ENCODE measurements at regions of chr18 and their contacts with region 1.

Region 1: DNA sequence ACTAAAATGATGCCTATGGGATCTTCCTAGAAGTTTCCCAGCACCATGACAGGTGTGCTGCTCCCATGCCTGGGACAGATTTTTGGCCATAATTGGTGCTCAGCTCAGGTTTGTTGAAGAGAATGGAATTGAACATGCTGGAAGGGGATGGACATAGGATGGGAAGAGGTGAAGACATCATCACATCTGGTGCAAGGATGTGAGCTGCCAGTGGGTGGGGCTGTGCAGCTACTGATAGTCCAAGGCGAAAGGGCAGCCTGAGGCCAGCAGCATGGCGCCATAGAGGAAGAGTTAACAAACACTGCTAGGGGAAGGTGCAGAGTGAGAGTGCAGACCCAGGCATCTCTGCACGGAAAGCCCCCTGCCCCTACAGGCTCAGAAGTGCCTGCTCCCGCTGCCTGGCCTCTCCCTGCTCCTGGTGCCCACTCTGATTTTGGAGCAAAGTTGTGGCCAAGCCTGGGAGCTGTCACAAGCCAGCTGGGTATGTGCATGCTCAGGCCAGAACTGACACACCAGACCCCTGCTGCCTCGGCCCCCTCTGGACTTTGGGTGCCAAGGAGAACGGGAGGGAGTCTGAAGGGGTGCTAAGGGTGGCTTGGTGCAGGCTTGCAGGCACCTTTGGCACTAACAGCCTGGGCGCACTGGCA is 178.6 kb downstream of the ZBTB7C start:
- DNase-seq: peak; percentile 31
- ATAC-seq: peak; percentile 89
- H3K4me3 ChIP-seq: no peak overlapping the region
- H3K27ac ChIP-seq: no peak overlapping the region
- H3K4me1 ChIP-seq: no peaks in the 10 kb centered on the region
- H3K27me3 ChIP-seq: peaks cover 8% of the 10 kb centered on the region; the same call in 1 of the 2 replicates
- CTCF ChIP-seq: peak; percentile 51
- POLR2A ChIP-seq: no peak
- RAD21 ChIP-seq: peak; percentile 70

Region 2: GRCh38 chr18:48345596-48345995 is 115.0 kb after region 1 on chr18:
- CTCF ChIA-PET with region 1: no interaction called
- POLR2A ChIA-PET with region 1: no interaction called
- dilution Hi-C with region 1: no loop called
- in situ Hi-C with region 1: no loop called
- intact Hi-C with region 1: loop called (anchors 1 kb)
- DNase-seq: peak; percentile 4
- ATAC-seq: no peak
- H3K4me3 ChIP-seq: no peak overlapping the region
- H3K27ac ChIP-seq: no peak overlapping the region
- H3K4me1 ChIP-seq: no peaks in the 10 kb centered on the region
- H3K27me3 ChIP-seq: peaks cover 29% of the 10 kb centered on the region
- CTCF ChIP-seq: peak; percentile 37
- POLR2A ChIP-seq: no peak
- RAD21 ChIP-seq: peak; percentile 46; the same call in 1 of the 2 replicates

Region 3: GRCh38 chr18:48470484-48471180 is 240.0 kb after region 1 on chr18:
- CTCF ChIA-PET with region 1: no interaction called
- POLR2A ChIA-PET with region 1: no interaction called
- dilution Hi-C with region 1: no loop called
- in situ Hi-C with region 1: no loop called
- intact Hi-C with region 1: loop called (anchors 5 kb)
- DNase-seq: no peak
- ATAC-seq: peak; percentile 64
- H3K4me3 ChIP-seq: no peak overlapping the region
- H3K27ac ChIP-seq: no peak overlapping the region
- H3K4me1 ChIP-seq: no peaks in the 10 kb centered on the region
- H3K27me3 ChIP-seq: peaks cover 30% of the 10 kb centered on the region
- CTCF ChIP-seq: no peak
- POLR2A ChIP-seq: no peak
- RAD21 ChIP-seq: no peak

Measured in IMR-90 (cell line).